ENCODE measurements at regions of chr6 and their contacts with region 1.

Region 1: GRCh38 chr6:109073344-109074132 is 21.1 kb downstream of the SESN1 start:
- DNase-seq: peak; percentile 53
- H3K4me3 ChIP-seq: no peak overlapping the region
- H3K27ac ChIP-seq: no peak overlapping the region
- H3K4me1 ChIP-seq: peaks cover 3% of the 10 kb centered on the region
- H3K27me3 ChIP-seq: no peaks in the 10 kb centered on the region
- CTCF ChIP-seq: peak; percentile 55 to 65

Region 2: GRCh38 chr6:108473197-108473596 is 600.3 kb before region 1 on chr6:
- CTCF ChIA-PET with region 1: no interaction called
- dilution Hi-C with region 1: no loop called
- in situ Hi-C with region 1: no loop called
- intact Hi-C with region 1: no loop called
- DNase-seq: no peak
- H3K4me3 ChIP-seq: no peak overlapping the region
- H3K27ac ChIP-seq: no peak overlapping the region
- H3K4me1 ChIP-seq: no peaks in the 10 kb centered on the region
- H3K27me3 ChIP-seq: no peaks in the 10 kb centered on the region
- CTCF ChIP-seq: no peak

Region 3: GRCh38 chr6:108835218-108835850 is 238.2 kb before region 1 on chr6:
- CTCF ChIA-PET with region 1: no interaction called
- dilution Hi-C with region 1: no loop called
- in situ Hi-C with region 1: no loop called
- intact Hi-C with region 1: loop called (anchors 2 kb)
- DNase-seq: peak; percentile 42
- H3K4me3 ChIP-seq: no peak overlapping the region
- H3K27ac ChIP-seq: no peak overlapping the region
- H3K4me1 ChIP-seq: peaks cover 20% of the 10 kb centered on the region
- H3K27me3 ChIP-seq: no peaks in the 10 kb centered on the region
- CTCF ChIP-seq: peak; percentile 82 to 91

Region 4: GRCh38 chr6:108874470-108875160 is 198.9 kb before region 1 on chr6:
- CTCF ChIA-PET with region 1: no interaction called
- dilution Hi-C with region 1: no loop called
- in situ Hi-C with region 1: loop called in 1 of 2 experiments (anchors 25 kb)
- intact Hi-C with region 1: no loop called
- DNase-seq: no peak
- H3K4me3 ChIP-seq: no peak overlapping the region
- H3K27ac ChIP-seq: no peak overlapping the region
- H3K4me1 ChIP-seq: no peaks in the 10 kb centered on the region
- H3K27me3 ChIP-seq: no peaks in the 10 kb centered on the region
- CTCF ChIP-seq: no peak

Region 5: GRCh38 chr6:108896111-108896661 is 177.4 kb before region 1 on chr6:
- CTCF ChIA-PET with region 1: interaction called, 6 read pairs
- dilution Hi-C with region 1: no loop called
- in situ Hi-C with region 1: loop called in 1 of 2 experiments (anchors 25 kb)
- intact Hi-C with region 1: loop called (anchors 2 kb)
- DNase-seq: peak; percentile 77
- H3K4me3 ChIP-seq: no peak overlapping the region
- H3K27ac ChIP-seq: peak overlapping the region; percentile 69
- H3K4me1 ChIP-seq: peaks cover 22% of the 10 kb centered on the region
- H3K27me3 ChIP-seq: no peaks in the 10 kb centered on the region
- CTCF ChIP-seq: no peak

Region 6: DNA sequence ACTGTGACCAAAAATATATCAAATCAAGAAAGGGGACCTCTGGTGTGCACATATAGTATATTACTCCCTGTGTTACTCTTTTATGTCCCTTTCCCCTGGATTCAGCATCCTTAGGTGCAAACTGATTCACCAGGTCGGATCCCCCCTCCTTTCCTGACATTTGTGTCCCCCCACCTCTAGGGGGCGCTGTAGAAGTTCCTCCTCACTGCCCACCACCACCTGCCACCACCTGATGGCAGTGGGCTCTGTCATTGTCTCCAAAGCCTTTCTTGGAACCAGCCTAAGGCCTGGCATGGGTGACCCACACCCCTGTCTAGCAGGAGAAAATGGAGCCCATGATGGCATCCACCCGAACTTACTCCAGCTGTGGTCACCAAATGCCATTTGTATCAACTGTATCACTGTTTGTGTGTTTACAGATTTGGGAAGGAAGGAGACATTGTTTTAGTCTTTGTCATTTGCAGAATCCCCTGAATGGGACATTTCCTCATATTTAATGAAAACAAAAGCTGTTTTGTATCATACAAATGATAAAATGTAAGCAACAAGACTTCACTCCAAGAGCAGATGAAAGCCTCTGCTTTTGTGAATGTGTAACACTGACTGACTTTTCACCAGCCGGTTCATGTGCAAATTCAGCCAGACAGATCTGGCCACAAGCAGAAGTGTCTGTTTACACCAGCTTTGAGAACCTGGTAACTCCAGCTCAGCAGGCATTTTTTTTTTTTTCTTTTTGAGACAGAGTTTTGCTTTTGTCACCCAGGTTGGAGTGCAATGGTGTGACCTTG is 159.1 kb before region 1 on chr6:
- CTCF ChIA-PET with region 1: interaction called, 11 read pairs
- dilution Hi-C with region 1: no loop called
- in situ Hi-C with region 1: no loop called
- intact Hi-C with region 1: loop called (anchors 5 kb)
- DNase-seq: no peak
- H3K4me3 ChIP-seq: no peak overlapping the region
- H3K27ac ChIP-seq: no peak overlapping the region
- H3K4me1 ChIP-seq: no peaks in the 10 kb centered on the region
- H3K27me3 ChIP-seq: no peaks in the 10 kb centered on the region
- CTCF ChIP-seq: peak; percentile 40 to 56

Region 7: GRCh38 chr6:108961985-108962384 is 111.6 kb before region 1 on chr6:
- CTCF ChIA-PET with region 1: no interaction called
- dilution Hi-C with region 1: loop called (anchors 5 kb)
- in situ Hi-C with region 1: no loop called
- intact Hi-C with region 1: no loop called
- DNase-seq: peak; percentile 46
- H3K4me3 ChIP-seq: no peak overlapping the region
- H3K27ac ChIP-seq: no peak overlapping the region
- H3K4me1 ChIP-seq: peaks cover 4% of the 10 kb centered on the region
- H3K27me3 ChIP-seq: no peaks in the 10 kb centered on the region
- CTCF ChIP-seq: no peak

Region 8: DNA sequence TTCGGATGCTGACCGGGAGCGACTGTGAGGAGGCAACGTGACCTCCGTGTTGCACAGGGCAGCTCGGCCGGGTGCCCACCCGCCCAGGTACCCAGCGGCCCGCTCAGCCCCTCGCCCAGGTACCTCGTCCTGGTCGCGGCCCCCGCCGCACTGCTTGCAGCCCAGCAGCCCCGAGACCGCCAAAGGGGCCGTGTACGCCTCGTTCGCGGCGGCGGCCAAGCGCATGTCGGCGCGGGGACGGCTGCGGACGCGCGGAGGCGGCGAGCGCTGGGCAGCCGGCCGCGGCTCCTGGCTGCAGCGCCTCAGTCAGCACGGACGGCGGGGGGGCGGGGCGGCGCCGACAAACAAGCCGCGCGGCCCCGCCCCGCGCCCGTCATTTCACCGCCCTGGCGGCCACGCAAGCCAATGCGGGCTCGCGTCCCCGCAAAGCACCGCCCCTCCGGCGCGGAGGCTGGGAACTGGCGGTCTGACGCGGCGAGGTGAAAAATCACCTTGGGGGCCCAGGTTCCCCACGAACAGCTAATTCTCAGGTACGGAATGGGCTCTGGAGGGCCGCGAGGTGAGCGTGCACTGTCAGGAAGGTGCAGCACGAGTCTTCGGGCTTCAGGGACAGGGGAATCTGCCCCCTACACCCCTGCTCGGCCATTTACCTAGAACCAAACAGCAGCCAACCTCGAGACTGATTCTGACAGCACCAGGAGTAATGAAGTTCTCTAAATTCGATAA is 64.1 kb before region 1 on chr6:
- CTCF ChIA-PET with region 1: interaction called, 3 read pairs
- dilution Hi-C with region 1: no loop called
- in situ Hi-C with region 1: no loop called
- intact Hi-C with region 1: loop called (anchors 1 kb)
- DNase-seq: peak; percentile 89
- H3K4me3 ChIP-seq: peak overlapping the region; percentile 80 to 100 (median 97)
- H3K27ac ChIP-seq: peak overlapping the region; percentile 98
- H3K4me1 ChIP-seq: peaks cover 16% of the 10 kb centered on the region
- H3K27me3 ChIP-seq: no peaks in the 10 kb centered on the region
- CTCF ChIP-seq: no peak

Region 9: GRCh38 chr6:109269953-109270517 is 196.5 kb after region 1 on chr6:
- CTCF ChIA-PET with region 1: no interaction called
- dilution Hi-C with region 1: no loop called
- in situ Hi-C with region 1: no loop called
- intact Hi-C with region 1: no loop called
- DNase-seq: no peak
- H3K4me3 ChIP-seq: no peak overlapping the region
- H3K27ac ChIP-seq: no peak overlapping the region
- H3K4me1 ChIP-seq: no peaks in the 10 kb centered on the region
- H3K27me3 ChIP-seq: no peaks in the 10 kb centered on the region
- CTCF ChIP-seq: no peak

Region 10: GRCh38 chr6:109526905-109527628 is 453.5 kb after region 1 on chr6:
- CTCF ChIA-PET with region 1: no interaction called
- dilution Hi-C with region 1: no loop called
- in situ Hi-C with region 1: no loop called
- intact Hi-C with region 1: no loop called
- DNase-seq: peak; percentile 44
- H3K4me3 ChIP-seq: no peak overlapping the region
- H3K27ac ChIP-seq: no peak overlapping the region
- H3K4me1 ChIP-seq: no peaks in the 10 kb centered on the region
- H3K27me3 ChIP-seq: peaks cover 4% of the 10 kb centered on the region
- CTCF ChIP-seq: peak; percentile 34 to 65

Region 11: DNA sequence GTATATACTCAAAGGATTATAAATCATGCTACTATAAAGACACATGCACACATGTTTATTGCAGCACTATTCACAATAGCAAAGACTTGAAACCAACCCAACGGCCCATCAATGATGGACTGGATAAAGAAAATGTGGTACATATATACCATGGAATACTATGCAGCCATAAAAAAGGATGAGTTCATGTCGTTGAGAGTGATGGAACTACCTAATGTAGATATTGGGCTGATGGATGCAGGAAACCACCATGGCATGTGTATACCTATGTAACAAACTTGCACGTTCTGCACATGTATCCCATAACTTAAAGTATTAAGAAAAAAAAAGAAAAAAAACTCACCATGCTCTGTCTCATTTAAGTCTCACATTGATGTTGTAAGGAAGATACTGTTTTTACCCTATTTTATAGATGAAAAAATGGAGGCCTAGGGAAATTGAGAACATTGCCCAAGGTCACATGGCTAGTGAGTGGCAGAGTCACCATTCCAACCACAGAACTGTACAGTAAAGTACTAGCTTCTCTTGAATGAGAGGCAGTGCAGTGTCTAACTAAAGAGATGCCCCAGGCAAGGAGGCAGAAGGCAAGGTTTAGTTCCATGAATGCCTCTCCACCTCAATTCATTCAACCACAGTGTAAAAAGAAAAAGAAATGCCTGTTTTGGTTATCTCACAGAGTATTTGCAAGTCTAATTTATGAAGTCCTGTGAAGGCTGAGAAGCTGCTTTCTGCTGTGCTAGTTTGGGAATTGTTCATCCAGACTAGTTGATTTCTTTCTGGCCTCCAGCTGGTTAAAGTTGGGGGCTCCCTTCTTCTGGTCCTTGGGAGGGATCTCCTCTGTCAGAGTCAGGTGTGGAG is 685.8 kb after region 1 on chr6:
- CTCF ChIA-PET with region 1: no interaction called
- dilution Hi-C with region 1: no loop called
- in situ Hi-C with region 1: no loop called
- intact Hi-C with region 1: no loop called
- DNase-seq: no peak
- H3K4me3 ChIP-seq: no peak overlapping the region
- H3K27ac ChIP-seq: no peak overlapping the region
- H3K4me1 ChIP-seq: no peaks in the 10 kb centered on the region
- H3K27me3 ChIP-seq: no peaks in the 10 kb centered on the region
- CTCF ChIP-seq: no peak

Measured in mammary epithelial cell (primary cell).